Activated B cell treated with CpG ODN at 0.5 μM for 24 hours (primary cell): ENCODE measurements at regions of chr3 and their contacts with region 1.

Region 1: DNA sequence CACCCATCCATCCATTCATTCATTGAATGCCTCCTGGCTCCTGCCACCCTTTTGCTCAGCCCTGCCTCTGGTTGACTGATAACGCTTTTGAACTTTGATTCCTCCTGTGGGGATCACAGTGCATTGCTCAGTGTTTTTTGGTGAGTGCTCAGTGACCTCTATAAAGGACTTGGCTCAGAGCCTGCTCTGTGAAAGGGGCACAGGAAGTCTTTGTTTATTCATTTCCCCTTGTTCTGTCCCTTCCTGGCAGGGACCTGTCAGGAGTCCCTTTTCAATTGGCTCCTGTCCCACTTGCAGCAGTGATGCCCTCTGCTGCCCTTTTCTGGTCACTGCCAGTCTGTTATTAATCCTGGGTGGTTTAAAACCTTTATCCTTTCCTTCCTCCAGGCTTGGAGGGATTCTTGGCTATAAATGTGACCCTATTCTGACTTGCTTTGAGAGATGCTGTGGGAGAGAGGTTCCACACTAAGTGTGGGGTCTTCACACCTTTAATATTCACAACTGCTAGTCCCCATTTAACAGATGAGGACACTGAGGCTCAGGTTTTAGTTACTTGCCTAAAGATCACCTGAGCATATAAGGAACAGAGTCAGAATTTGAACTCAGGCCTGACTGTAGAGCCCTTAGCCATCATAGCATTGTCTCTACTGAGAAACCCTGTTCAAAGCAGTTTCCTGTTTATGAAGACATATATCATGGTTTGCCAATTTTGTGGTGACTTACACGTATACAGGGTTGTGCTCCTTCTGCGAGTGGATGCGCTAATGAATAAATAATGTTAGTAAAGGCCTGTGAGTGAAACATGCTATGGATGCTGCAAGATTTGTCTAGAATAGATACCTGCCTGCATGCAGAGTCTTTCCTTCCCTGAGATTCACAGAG is 23.2 kb upstream of the TATDN2 start:
- DNase-seq: peak; percentile 32
- ATAC-seq: peak; percentile 63
- H3K4me3 Mint-ChIP-seq: peak overlapping the region; percentile 48
- H3K27ac Mint-ChIP-seq: peak overlapping the region; percentile 61
- H3K4me1 Mint-ChIP-seq: peaks cover 65% of the 10 kb centered on the region
- H3K27me3 Mint-ChIP-seq: no peaks in the 10 kb centered on the region
- CTCF ChIP-seq: peak; percentile 85

Region 2: DNA sequence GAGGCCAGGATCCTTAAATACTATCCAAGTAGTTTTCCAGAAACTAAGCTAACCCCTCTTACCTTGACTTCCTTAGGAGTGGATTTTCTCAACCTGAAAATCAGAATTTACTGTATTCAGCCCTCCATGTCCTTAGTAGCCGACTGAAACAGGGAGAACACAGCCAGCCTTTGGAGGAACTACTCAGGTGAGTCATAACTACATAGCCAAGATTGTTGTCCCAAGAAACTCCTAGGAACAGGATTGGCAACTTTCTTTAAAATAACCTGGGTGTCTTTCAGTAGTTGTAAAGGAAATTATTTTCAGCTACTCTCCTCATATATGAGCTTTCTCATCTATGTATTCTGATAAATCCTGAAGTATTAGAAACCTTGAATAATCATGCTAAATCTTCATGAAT is 139.3 kb before region 1 on chr3:
- CTCF ChIA-PET with region 1: no interaction called
- POLR2A ChIA-PET with region 1: no interaction called
- intact Hi-C with region 1: loop called (anchors 10 kb)
- DNase-seq: no peak
- ATAC-seq: no peak
- H3K4me3 Mint-ChIP-seq: no peak overlapping the region
- H3K27ac Mint-ChIP-seq: no peak overlapping the region
- H3K4me1 Mint-ChIP-seq: no peaks in the 10 kb centered on the region
- H3K27me3 Mint-ChIP-seq: no peaks in the 10 kb centered on the region
- CTCF ChIP-seq: no peak

Region 3: DNA sequence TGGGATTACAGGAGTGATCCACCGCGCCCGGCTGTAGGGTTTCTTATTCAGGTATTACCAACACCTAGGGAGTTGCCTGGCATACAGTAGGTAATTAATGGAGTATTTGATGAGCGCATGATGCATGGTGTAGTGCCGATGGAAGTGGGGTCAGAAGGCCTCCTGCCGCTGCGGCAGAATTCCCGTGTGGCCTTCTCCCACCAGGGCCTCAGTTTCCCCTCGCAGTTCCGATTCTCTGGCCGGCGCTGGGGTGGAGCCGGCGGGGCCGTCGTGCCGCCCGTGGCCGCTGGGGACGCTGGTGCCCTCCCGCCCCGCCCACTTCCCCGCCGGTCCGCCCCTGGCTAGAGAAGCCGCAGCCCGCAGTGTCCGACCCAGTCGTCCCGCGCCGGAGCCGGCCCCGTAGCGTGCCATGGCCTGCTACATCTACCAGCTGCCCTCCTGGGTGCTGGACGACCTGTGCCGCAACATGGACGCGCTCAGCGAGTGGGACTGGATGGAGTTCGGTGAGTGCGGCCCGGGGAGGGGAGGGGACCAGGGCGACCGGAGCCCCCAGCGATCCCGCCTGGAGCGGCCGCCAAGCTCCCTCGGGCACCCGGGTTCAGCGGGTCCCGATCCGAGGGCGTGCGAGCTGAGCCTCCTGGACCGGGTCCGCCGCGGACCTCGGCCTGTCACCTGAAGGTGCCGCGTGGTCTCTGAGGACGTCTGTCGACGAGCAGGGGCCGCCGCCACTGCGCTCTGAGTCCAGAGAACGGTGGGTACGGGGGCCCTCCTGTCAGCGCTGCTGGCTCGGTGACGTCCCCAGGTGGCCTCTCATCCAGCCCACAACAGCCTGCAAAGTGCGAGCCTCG is 60.3 kb before region 1 on chr3 and contains the start of gene IRAK2:
- CTCF ChIA-PET with region 1: interaction called, 24 read pairs
- POLR2A ChIA-PET with region 1: interaction called, 7 read pairs
- intact Hi-C with region 1: loop called (anchors 1 kb)
- DNase-seq: peak; percentile 65
- ATAC-seq: peak; percentile 91
- H3K4me3 Mint-ChIP-seq: peak within 1 kb of the TSS; percentile 86
- H3K27ac Mint-ChIP-seq: no peak within 1 kb of the TSS
- H3K4me1 Mint-ChIP-seq: peaks cover 38% of the 10 kb centered on the region
- H3K27me3 Mint-ChIP-seq: no peaks in the 10 kb centered on the region
- CTCF ChIP-seq: peak; percentile 64
- total RNA-seq, gene IRAK2: 8.6 and 8.8 TPM in 2 replicates

Region 4: DNA sequence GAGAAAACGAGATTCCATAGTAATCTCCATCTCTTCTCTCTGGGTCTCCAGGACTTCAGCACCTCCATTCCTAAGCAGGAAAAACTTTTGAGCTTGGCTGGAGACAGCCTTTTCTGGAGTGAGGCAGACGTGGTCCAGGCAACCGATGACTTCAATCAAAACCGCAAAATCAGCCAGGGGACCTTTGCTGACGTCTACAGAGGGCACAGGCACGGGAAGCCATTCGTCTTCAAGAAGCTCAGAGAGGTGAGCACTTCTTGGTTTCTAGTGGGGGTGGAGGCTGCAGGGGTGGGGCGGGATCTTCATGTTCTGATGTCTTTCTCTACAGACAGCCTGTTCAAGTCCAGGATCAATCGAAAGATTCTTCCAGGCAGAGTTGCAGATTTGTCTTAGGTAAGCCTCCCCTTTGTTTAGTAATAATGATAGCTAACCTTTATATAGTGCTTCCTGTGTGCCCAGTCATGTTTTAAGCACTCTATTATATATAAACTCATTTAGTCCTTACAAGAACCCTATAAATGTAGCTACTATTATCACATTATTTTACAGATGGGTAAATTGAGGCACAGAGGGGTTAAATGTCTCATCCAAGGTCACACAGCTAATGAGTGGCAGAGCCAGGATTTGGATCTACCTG is 11.8 kb before region 1 on chr3:
- CTCF ChIA-PET with region 1: interaction called, 7 read pairs
- POLR2A ChIA-PET with region 1: interaction called, 22 read pairs
- intact Hi-C with region 1: loop called (anchors 1 kb)
- DNase-seq: no peak
- ATAC-seq: peak; percentile 89
- H3K4me3 Mint-ChIP-seq: peak overlapping the region; percentile 25
- H3K27ac Mint-ChIP-seq: peak overlapping the region; percentile 81
- H3K4me1 Mint-ChIP-seq: peaks cover 30% of the 10 kb centered on the region
- H3K27me3 Mint-ChIP-seq: no peaks in the 10 kb centered on the region
- CTCF ChIP-seq: no peak